ENCODE measurements at regions of chr12 and their contacts with region 1.

Region 1: DNA sequence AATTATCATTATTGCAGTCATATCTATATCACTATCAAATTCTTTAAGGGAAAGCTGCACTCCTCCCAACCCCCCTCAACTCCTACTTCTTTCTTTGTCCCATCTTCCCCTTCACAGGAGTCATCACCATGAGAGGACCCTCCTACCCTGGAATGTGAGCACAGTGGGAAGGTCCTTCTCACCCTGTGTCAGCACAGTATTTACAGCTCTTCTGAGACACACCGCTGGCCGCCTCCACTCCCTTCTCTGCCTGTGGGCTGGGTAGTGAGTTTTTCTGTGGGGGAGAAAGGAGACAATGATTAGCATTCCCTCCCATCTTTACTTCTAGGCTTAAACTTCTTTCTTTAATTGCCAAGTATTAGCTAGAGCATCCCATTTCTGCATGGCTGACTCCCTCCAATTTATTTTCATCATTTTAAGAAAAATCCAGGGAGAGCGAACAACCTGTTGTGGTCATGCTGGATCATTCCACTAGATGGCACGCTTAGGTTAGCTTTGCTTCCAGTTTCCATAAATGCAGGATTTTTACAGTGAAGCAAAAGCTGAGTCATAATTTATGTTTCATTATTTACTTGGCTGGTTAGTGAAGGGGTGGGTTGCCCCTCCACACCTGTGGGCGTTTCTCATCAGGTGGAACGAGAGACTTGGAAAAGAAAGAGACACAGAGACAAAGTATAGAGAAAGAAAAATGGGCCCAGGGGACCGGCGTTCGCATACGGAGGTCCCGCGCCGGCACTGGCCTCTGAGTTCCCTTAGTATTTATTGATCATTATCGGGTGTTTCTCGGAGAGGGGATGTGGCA is 188.5 kb downstream of the ALX1 start:
- DNase-seq: peak; percentile 29
- ATAC-seq: no peak
- H3K4me3 ChIP-seq: peak overlapping the region in 4 of 5 experiments; percentile 14 to 44 (median 30)
- H3K4me3 Mint-ChIP-seq: peak overlapping the region; percentile 90
- H3K27ac ChIP-seq: no peak overlapping the region
- H3K27ac Mint-ChIP-seq: no peak overlapping the region
- H3K4me1 ChIP-seq: peaks cover 3 to 6% of the 10 kb centered on the region in 2 donors
- H3K4me1 Mint-ChIP-seq: peaks cover 13% of the 10 kb centered on the region
- H3K27me3 ChIP-seq: no peaks in the 10 kb centered on the region
- H3K27me3 Mint-ChIP-seq: peaks cover 6% of the 10 kb centered on the region
- CTCF ChIP-seq: peak; percentile 62

Region 2: GRCh38 chr12:85580562-85581168 is 112.1 kb after region 1 on chr12:
- CTCF ChIA-PET with region 1: no interaction called
- POLR2A ChIA-PET with region 1: no interaction called
- intact Hi-C with region 1: no loop called
- DNase-seq: no peak
- ATAC-seq: no peak
- H3K4me3 ChIP-seq: no peak overlapping the region
- H3K4me3 Mint-ChIP-seq: no peak overlapping the region
- H3K27ac ChIP-seq: no peak overlapping the region
- H3K27ac Mint-ChIP-seq: no peak overlapping the region
- H3K4me1 ChIP-seq: no peaks in the 10 kb centered on the region
- H3K4me1 Mint-ChIP-seq: no peaks in the 10 kb centered on the region
- H3K27me3 ChIP-seq: no peaks in the 10 kb centered on the region
- H3K27me3 Mint-ChIP-seq: no peaks in the 10 kb centered on the region
- CTCF ChIP-seq: no peak

Region 3: DNA sequence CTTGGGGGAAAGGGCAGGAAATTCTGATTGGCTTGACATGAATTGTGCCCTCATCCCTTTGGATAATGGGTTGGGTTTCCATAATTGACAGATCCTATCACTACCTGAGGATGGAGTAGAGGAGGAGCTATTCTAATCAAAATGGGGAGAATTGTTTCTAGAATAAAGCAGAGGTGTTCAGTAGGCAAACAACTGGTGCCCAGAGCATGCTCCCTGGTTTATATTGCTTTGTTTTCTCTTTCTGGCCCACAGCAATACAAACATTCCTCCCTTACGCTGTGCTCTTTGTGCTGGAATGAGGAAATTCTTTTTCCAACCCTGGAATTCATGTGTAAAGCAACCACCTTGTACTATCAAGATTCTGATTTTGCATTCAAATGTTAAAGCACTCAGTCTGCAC is 220.3 kb after region 1 on chr12:
- CTCF ChIA-PET with region 1: no interaction called
- POLR2A ChIA-PET with region 1: no interaction called
- intact Hi-C with region 1: no loop called
- DNase-seq: no peak
- ATAC-seq: no peak
- H3K4me3 ChIP-seq: no peak overlapping the region
- H3K4me3 Mint-ChIP-seq: no peak overlapping the region
- H3K27ac ChIP-seq: no peak overlapping the region
- H3K27ac Mint-ChIP-seq: no peak overlapping the region
- H3K4me1 ChIP-seq: no peaks in the 10 kb centered on the region
- H3K4me1 Mint-ChIP-seq: no peaks in the 10 kb centered on the region
- H3K27me3 ChIP-seq: no peaks in the 10 kb centered on the region
- H3K27me3 Mint-ChIP-seq: no peaks in the 10 kb centered on the region
- CTCF ChIP-seq: no peak

Region 4: GRCh38 chr12:85866986-85867776 is 398.6 kb after region 1 on chr12:
- CTCF ChIA-PET with region 1: no interaction called
- POLR2A ChIA-PET with region 1: no interaction called
- intact Hi-C with region 1: loop called (anchors 5 kb)
- DNase-seq: peak; percentile 19
- ATAC-seq: no peak
- H3K4me3 ChIP-seq: no peak overlapping the region
- H3K4me3 Mint-ChIP-seq: no peak overlapping the region
- H3K27ac ChIP-seq: no peak overlapping the region
- H3K27ac Mint-ChIP-seq: no peak overlapping the region
- H3K4me1 ChIP-seq: no peaks in the 10 kb centered on the region
- H3K4me1 Mint-ChIP-seq: no peaks in the 10 kb centered on the region
- H3K27me3 ChIP-seq: no peaks in the 10 kb centered on the region
- H3K27me3 Mint-ChIP-seq: no peaks in the 10 kb centered on the region
- CTCF ChIP-seq: peak; percentile 59

Measured in B cell (primary cell).